A549 (cell line): ENCODE measurements at regions of chr5 and their contacts with region 1.

Region 1: GRCh38 chr5:32837211-32837610 is 126.1 kb downstream of the NPR3 start:
- DNase-seq: peak in 1 of 2 experiments; percentile 16
- ATAC-seq: no peak
- H3K4me3 ChIP-seq: no peak overlapping the region
- H3K27ac ChIP-seq: no peak overlapping the region
- H3K4me1 ChIP-seq: 0 out of 3 replicates have a peak, but pooled peaks cover under 1% of the 10 kb centered on the region
- CTCF ChIP-seq: no peak
- EP300 ChIP-seq: no peak
- POLR2A ChIP-seq: no peak
- RAD21 ChIP-seq: no peak

Region 2: GRCh38 chr5:32852535-32852934 is 15.3 kb after region 1 on chr5:
- CTCF ChIA-PET with region 1: interaction called, 16 read pairs
- POLR2A ChIA-PET with region 1: no interaction called
- DNase-seq: peak; percentile 15 to 83
- ATAC-seq: peak; percentile 88 to 96
- H3K4me3 ChIP-seq: no peak overlapping the region
- H3K27ac ChIP-seq: peak overlapping the region; percentile 62 to 79
- H3K4me1 ChIP-seq: peaks cover 16% of the 10 kb centered on the region
- CTCF ChIP-seq: peak; percentile 79
- EP300 ChIP-seq: no peak
- POLR2A ChIP-seq: no peak
- RAD21 ChIP-seq: peak; percentile 83 to 85